Activated CD4-positive, alpha-beta T cell treated with anti-CD3 and anti-CD28 coated beads, Interleukin-2, amount 10 ng/mL, durations not matched to agents 24 days and 14 days (primary cell): ENCODE measurements at regions of chr12 and their contacts with region 1.

Region 1: GRCh38 chr12:7933255-7933729 is 2.7 kb downstream of the SLC2A3 start:
- DNase-seq: peak; percentile 92
- H3K4me3 Mint-ChIP-seq: no peak overlapping the region
- H3K27ac Mint-ChIP-seq: no peak overlapping the region
- H3K4me1 Mint-ChIP-seq: peaks cover 28% of the 10 kb centered on the region
- H3K27me3 Mint-ChIP-seq: no peaks in the 10 kb centered on the region

Region 2: GRCh38 chr12:7959701-7960121 is 26.4 kb after region 1 on chr12:
- intact Hi-C with region 1: loop called (anchors 1 kb)
- DNase-seq: peak; percentile 90
- H3K4me3 Mint-ChIP-seq: peak overlapping the region; percentile 94
- H3K27ac Mint-ChIP-seq: peak overlapping the region; percentile 95
- H3K4me1 Mint-ChIP-seq: peaks cover 36% of the 10 kb centered on the region
- H3K27me3 Mint-ChIP-seq: no peaks in the 10 kb centered on the region

Region 3: GRCh38 chr12:7989827-7990551 is 56.7 kb after region 1 on chr12:
- intact Hi-C with region 1: loop called (anchors 1 kb)
- DNase-seq: peak; percentile 93
- H3K4me3 Mint-ChIP-seq: peak overlapping the region; percentile 75
- H3K27ac Mint-ChIP-seq: peak overlapping the region; percentile 88
- H3K4me1 Mint-ChIP-seq: peaks cover 37% of the 10 kb centered on the region
- H3K27me3 Mint-ChIP-seq: no peaks in the 10 kb centered on the region

Region 4: GRCh38 chr12:8026291-8026900 is 93.1 kb after region 1 on chr12:
- intact Hi-C with region 1: loop called (anchors 1 kb)
- DNase-seq: peak; percentile 99
- H3K4me3 Mint-ChIP-seq: peak overlapping the region; percentile 91
- H3K27ac Mint-ChIP-seq: peak overlapping the region; percentile 100
- H3K4me1 Mint-ChIP-seq: peaks cover 18% of the 10 kb centered on the region
- H3K27me3 Mint-ChIP-seq: no peaks in the 10 kb centered on the region